ENCODE measurements at regions of chr19 and their contacts with region 1.

Region 1: GRCh38 chr19:39941615-39942365 is 7.4 kb upstream of the FCGBP start:
- DNase-seq: no peak

Region 2: GRCh38 chr19:39788244-39788643 is 153.5 kb before region 1 on chr19:
- in situ Hi-C with region 1: loop called (anchors 10 kb)
- DNase-seq: no peak

Region 3: GRCh38 chr19:40059624-40060023 is 117.8 kb after region 1 on chr19:
- in situ Hi-C with region 1: no loop called
- DNase-seq: no peak